GM12878 (cell line): ENCODE measurements at regions of chr22 and their contacts with region 1.

Region 1: DNA sequence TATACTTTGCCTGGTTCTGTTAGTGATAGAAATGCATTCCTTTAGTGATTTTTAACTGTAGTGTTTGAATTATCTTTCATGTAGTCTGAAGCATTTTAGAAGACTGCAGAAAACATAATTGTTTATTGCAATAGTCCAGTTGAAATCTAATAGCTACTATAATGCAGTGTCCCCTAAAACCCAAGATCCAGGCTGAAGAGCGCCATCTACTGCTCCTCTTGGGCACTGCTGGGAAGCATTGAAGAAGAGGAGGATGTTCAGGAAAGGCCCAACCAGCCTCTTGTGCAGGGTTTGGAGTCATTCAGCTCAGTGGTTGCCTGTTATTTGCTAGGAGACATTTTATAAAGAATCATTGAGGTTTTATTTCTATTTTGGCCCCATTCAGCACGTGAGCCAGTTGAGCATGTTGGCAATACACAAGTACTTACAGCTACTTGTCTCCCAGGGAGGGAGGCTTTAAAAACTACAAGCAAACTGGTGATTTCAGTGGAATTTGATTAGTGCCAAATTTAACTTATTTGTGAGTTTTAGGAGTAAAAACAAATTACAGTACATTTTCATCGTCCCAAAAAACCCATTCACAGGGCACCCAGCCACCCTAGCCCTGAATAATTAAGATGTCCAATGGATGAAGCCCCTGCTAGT is 74.9 kb upstream of the HORMAD2 start:
- DNase-seq: peak; percentile 17
- ATAC-seq: peak; percentile 85
- H3K4me3 ChIP-seq: no peak overlapping the region
- H3K27ac ChIP-seq: no peak overlapping the region
- H3K4me1 ChIP-seq: no peaks in the 10 kb centered on the region
- H3K27me3 ChIP-seq: no peaks in the 10 kb centered on the region
- CTCF ChIP-seq: peak; percentile 91 to 97 (median 96)
- EP300 ChIP-seq: no peak
- POLR2A ChIP-seq: no peak
- RAD21 ChIP-seq: peak; percentile 98

Region 2: GRCh38 chr22:29679316-29679715 is 326.0 kb before region 1 on chr22:
- CTCF ChIA-PET with region 1: interaction called, 10 read pairs
- POLR2A ChIA-PET with region 1: no interaction called
- RAD21 ChIA-PET with region 1: interaction called, 4 read pairs
- SMC1A ChIA-PET with region 1: no interaction called
- in situ Hi-C with region 1: no loop called
- intact Hi-C with region 1: no loop called
- DNase-seq: no peak
- ATAC-seq: no peak
- H3K4me3 ChIP-seq: no peak overlapping the region
- H3K27ac ChIP-seq: no peak overlapping the region
- H3K4me1 ChIP-seq: no peaks in the 10 kb centered on the region
- H3K27me3 ChIP-seq: no peaks in the 10 kb centered on the region
- CTCF ChIP-seq: no peak
- EP300 ChIP-seq: no peak
- POLR2A ChIP-seq: no peak
- RAD21 ChIP-seq: no peak

Region 3: GRCh38 chr22:29772170-29772641 is 233.1 kb before region 1 on chr22:
- CTCF ChIA-PET with region 1: interaction called, 14 read pairs
- POLR2A ChIA-PET with region 1: no interaction called
- RAD21 ChIA-PET with region 1: interaction called, 8 read pairs
- SMC1A ChIA-PET with region 1: interaction called, 6 read pairs
- in situ Hi-C with region 1: no loop called
- intact Hi-C with region 1: no loop called
- DNase-seq: no peak
- ATAC-seq: 0 out of 3 replicates have a peak, but pooled peaks have one; percentile 19
- H3K4me3 ChIP-seq: no peak overlapping the region
- H3K27ac ChIP-seq: no peak overlapping the region
- H3K4me1 ChIP-seq: no peaks in the 10 kb centered on the region
- H3K27me3 ChIP-seq: no peaks in the 10 kb centered on the region
- CTCF ChIP-seq: peak; percentile 29 to 49 (median 39); a peak in 4 of 6 replicates
- EP300 ChIP-seq: no peak
- POLR2A ChIP-seq: no peak
- RAD21 ChIP-seq: 0 out of 2 replicates have a peak, but pooled peaks have one; percentile 23

Region 4: DNA sequence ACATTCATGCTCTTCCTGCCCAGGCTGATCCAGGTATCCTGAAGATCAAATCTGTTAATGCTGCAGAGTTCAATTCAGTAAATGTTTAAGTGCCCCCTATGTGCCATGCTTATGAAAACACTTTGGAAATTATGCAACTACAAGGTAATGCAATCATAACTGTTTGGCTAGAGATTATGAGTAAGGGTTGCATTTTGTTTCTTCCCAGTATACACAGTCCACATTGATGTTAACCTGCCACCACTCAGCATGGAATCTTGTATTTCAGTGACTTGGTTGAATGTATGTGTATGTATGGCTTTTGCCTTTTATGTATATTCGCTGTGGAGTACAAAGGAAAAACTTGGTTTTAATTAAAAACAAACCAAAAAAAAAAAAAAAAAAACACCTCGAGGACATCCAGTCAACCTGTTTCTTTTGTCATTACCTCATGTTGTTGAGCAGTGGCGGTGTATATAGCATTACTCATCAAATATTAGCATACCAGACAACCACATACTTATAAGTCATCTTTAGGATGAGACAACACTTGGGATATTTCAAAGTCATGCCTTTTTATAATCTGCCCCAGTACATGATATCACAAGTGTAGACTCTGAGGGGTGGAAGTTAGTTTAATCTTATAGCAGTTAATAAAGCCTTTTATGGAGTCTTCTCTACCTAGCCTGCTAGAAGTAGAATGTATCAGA is 11.2 kb before region 1 on chr22:
- CTCF ChIA-PET with region 1: interaction called, 23 read pairs
- POLR2A ChIA-PET with region 1: no interaction called
- RAD21 ChIA-PET with region 1: interaction called, 7 read pairs
- SMC1A ChIA-PET with region 1: interaction called, 27 read pairs
- in situ Hi-C with region 1: no loop called
- intact Hi-C with region 1: no loop called
- DNase-seq: no peak
- ATAC-seq: no peak
- H3K4me3 ChIP-seq: no peak overlapping the region
- H3K27ac ChIP-seq: no peak overlapping the region
- H3K4me1 ChIP-seq: no peaks in the 10 kb centered on the region
- H3K27me3 ChIP-seq: no peaks in the 10 kb centered on the region
- CTCF ChIP-seq: no peak; a peak in 1 of 6 replicates
- EP300 ChIP-seq: no peak
- POLR2A ChIP-seq: no peak
- RAD21 ChIP-seq: 0 out of 2 replicates have a peak, but pooled peaks have one; percentile 4

Region 5: GRCh38 chr22:30079952-30080533 is 74.7 kb after region 1 on chr22 and contains the start of gene HORMAD2:
- CTCF ChIA-PET with region 1: interaction called, 22 read pairs
- POLR2A ChIA-PET with region 1: no interaction called
- RAD21 ChIA-PET with region 1: interaction called, 19 read pairs
- SMC1A ChIA-PET with region 1: interaction called, 15 read pairs
- in situ Hi-C with region 1: no loop called
- intact Hi-C with region 1: no loop called
- DNase-seq: no peak
- ATAC-seq: peak; percentile 73
- H3K4me3 ChIP-seq: no peak within 1 kb of the TSS
- H3K27ac ChIP-seq: no peak within 1 kb of the TSS
- H3K4me1 ChIP-seq: peaks cover 19% of the 10 kb centered on the region
- H3K27me3 ChIP-seq: no peaks in the 10 kb centered on the region
- CTCF ChIP-seq: no peak
- EP300 ChIP-seq: no peak
- POLR2A ChIP-seq: no peak
- RAD21 ChIP-seq: no peak
- polyA plus RNA-seq, gene HORMAD2: 0.13 TPM in 1 of 2 experiments, not detected in the other

Region 6: DNA sequence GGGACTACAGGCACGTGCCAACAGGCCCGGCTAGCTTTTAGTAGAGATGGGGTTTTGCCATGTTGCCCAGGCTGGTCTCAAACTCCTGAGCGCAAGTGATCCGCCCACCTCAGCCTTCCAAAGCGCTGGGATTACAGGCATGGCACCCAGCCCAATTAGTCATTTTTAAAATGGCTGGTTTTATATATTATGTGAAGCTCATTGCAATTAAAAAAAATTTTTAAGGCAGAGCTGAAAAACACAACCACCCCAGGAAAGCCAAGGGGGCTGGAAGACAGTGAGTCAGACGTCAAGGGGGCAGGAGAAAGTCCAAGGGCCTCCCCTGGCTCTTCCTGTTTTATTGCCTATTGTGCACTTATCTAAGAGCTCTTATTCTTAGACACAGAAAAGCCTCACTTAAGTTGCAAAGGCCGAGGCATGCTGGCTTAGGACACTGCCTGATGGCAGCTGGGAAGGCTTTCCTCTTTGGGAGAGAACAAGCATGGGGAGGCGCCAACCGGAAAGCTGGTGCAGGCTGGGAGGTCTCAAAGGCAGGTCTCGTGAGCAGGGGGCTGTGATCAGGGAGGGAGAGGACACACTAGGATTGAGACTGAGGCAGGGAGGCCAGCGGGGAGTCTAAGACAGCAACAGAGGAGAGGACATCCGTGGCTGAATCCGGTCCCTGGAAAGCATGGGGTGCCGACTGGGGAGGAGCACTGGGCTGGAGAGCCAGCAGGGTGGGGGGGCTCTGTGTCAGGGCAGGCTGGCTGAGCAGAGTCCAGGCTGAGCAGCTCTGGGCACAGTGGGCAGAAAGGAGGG is 272.4 kb after region 1 on chr22:
- CTCF ChIA-PET with region 1: no interaction called
- POLR2A ChIA-PET with region 1: no interaction called
- RAD21 ChIA-PET with region 1: no interaction called
- SMC1A ChIA-PET with region 1: no interaction called
- in situ Hi-C with region 1: no loop called
- intact Hi-C with region 1: no loop called
- DNase-seq: no peak
- ATAC-seq: no peak
- H3K4me3 ChIP-seq: no peak overlapping the region
- H3K27ac ChIP-seq: no peak overlapping the region
- H3K4me1 ChIP-seq: no peaks in the 10 kb centered on the region
- H3K27me3 ChIP-seq: no peaks in the 10 kb centered on the region; a peak in 1 of 4 replicates
- CTCF ChIP-seq: no peak
- EP300 ChIP-seq: no peak
- POLR2A ChIP-seq: no peak
- RAD21 ChIP-seq: no peak

Region 7: GRCh38 chr22:30822216-30823014 is 817.1 kb after region 1 on chr22:
- CTCF ChIA-PET with region 1: no interaction called
- POLR2A ChIA-PET with region 1: no interaction called
- RAD21 ChIA-PET with region 1: no interaction called
- SMC1A ChIA-PET with region 1: no interaction called
- in situ Hi-C with region 1: no loop called
- intact Hi-C with region 1: no loop called
- DNase-seq: no peak
- ATAC-seq: peak; percentile 55
- H3K4me3 ChIP-seq: no peak overlapping the region
- H3K27ac ChIP-seq: no peak overlapping the region
- H3K4me1 ChIP-seq: no peaks in the 10 kb centered on the region
- H3K27me3 ChIP-seq: peaks cover 9 to 10% of the 10 kb centered on the region in 2 experiments
- CTCF ChIP-seq: no peak
- EP300 ChIP-seq: no peak
- POLR2A ChIP-seq: no peak
- RAD21 ChIP-seq: no peak